ENCODE measurements at regions of chr3 and their contacts with region 1.

Region 1: GRCh38 chr3:99875929-99876841 is 58.5 kb downstream of the CMSS1 start:
- DNase-seq: peak; percentile 89
- H3K4me3 ChIP-seq: peak overlapping the region; percentile 60 to 96 (median 91)
- H3K27ac ChIP-seq: peak overlapping the region; percentile 99
- H3K4me1 ChIP-seq: peaks cover 49% of the 10 kb centered on the region
- H3K27me3 ChIP-seq: no peaks in the 10 kb centered on the region
- CTCF ChIP-seq: peak in 1 of 2 donors; percentile 21
- POLR2A ChIP-seq: peak; percentile 96

Region 2: DNA sequence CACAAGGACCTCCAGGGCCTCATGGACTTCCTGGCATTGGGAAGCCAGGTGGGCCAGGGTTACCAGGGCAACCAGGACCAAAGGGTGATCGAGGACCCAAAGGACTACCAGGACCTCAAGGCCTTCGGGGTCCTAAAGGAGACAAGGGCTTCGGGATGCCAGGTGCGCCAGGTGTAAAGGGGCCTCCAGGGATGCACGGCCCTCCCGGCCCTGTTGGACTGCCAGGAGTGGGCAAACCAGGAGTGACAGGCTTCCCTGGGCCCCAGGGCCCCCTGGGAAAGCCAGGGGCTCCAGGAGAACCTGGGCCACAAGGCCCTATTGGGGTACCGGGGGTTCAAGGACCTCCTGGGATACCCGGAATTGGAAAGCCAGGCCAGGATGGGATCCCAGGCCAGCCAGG is 81.7 kb before region 1 on chr3:
- CTCF ChIA-PET with region 1: no interaction called
- POLR2A ChIA-PET with region 1: no interaction called
- dilution Hi-C with region 1: no loop called
- intact Hi-C with region 1: no loop called
- DNase-seq: no peak
- H3K4me3 ChIP-seq: no peak overlapping the region
- H3K27ac ChIP-seq: no peak overlapping the region
- H3K4me1 ChIP-seq: no peaks in the 10 kb centered on the region
- H3K27me3 ChIP-seq: no peaks in the 10 kb centered on the region
- CTCF ChIP-seq: no peak
- POLR2A ChIP-seq: no peak

Region 3: GRCh38 chr3:99901200-99901926 is 25.2 kb after region 1 on chr3:
- CTCF ChIA-PET with region 1: interaction called, 3 read pairs
- POLR2A ChIA-PET with region 1: interaction called, 4 read pairs
- dilution Hi-C with region 1: no loop called
- intact Hi-C with region 1: loop called (anchors 1 kb)
- DNase-seq: peak; percentile 92
- H3K4me3 ChIP-seq: peak overlapping the region in 1 of 3 experiments; percentile 24
- H3K27ac ChIP-seq: peak overlapping the region; percentile 94
- H3K4me1 ChIP-seq: peaks cover 34% of the 10 kb centered on the region
- H3K27me3 ChIP-seq: no peaks in the 10 kb centered on the region
- CTCF ChIP-seq: no peak
- POLR2A ChIP-seq: no peak

Region 4: DNA sequence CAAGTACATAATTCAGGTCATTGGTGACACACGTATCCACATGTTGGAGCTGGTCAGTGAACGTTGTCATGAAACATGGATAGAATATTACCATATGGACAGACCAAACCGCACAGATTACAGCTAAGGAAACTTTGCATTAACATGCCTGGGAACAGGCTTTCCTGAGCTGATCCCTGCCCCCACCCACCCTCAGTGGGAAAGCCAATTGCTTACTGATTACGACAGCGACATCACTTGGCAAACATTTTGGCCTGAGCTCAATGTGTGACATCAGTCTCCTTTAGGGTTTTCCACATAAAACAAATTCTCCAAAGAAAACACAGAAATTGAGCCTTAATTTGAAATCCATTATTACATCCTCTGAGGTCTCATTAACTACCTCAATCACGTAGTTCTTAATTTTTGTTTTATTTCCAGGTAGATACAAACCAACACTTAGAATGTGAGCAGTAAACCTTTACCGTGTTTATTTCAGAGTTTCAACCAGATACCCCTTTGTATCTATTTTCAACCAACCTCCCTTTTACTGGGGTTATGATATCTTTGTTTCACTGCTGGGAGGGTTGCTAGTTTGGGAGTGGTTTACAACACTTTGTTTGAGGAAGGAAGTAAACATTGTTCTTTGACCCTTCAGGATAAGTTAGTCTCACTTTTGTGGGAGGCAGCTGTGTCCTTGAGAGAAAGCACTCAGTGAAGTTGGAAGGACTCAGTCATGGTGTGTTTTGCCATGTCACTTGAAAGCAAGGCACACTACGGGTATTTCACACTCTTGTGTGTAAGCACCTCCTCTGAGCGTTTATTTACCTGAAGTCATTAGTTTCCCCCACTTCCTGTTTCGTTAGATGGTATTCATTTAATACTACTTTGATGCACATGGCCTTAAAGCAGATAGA is 44.5 kb after region 1 on chr3:
- CTCF ChIA-PET with region 1: interaction called, 4 read pairs
- POLR2A ChIA-PET with region 1: interaction called, 4 read pairs
- dilution Hi-C with region 1: no loop called
- intact Hi-C with region 1: loop called (anchors 2 kb)
- DNase-seq: peak; percentile 66
- H3K4me3 ChIP-seq: no peak overlapping the region
- H3K27ac ChIP-seq: peak overlapping the region; percentile 65
- H3K4me1 ChIP-seq: peaks cover 41% of the 10 kb centered on the region
- H3K27me3 ChIP-seq: no peaks in the 10 kb centered on the region
- CTCF ChIP-seq: no peak
- POLR2A ChIP-seq: no peak

Region 5: GRCh38 chr3:99938270-99938911 is 62.2 kb after region 1 on chr3:
- CTCF ChIA-PET with region 1: no interaction called
- POLR2A ChIA-PET with region 1: no interaction called
- dilution Hi-C with region 1: no loop called
- intact Hi-C with region 1: no loop called
- DNase-seq: peak; percentile 41
- H3K4me3 ChIP-seq: no peak overlapping the region
- H3K27ac ChIP-seq: no peak overlapping the region
- H3K4me1 ChIP-seq: peaks cover 16% of the 10 kb centered on the region
- H3K27me3 ChIP-seq: no peaks in the 10 kb centered on the region
- CTCF ChIP-seq: no peak
- POLR2A ChIP-seq: no peak

Region 6: GRCh38 chr3:100006570-100007271 is 130.5 kb after region 1 on chr3:
- CTCF ChIA-PET with region 1: interaction called, 3 read pairs
- POLR2A ChIA-PET with region 1: interaction called, 4 read pairs
- dilution Hi-C with region 1: no loop called
- intact Hi-C with region 1: loop called (anchors 2 kb)
- DNase-seq: peak; percentile 72
- H3K4me3 ChIP-seq: no peak overlapping the region
- H3K27ac ChIP-seq: no peak overlapping the region
- H3K4me1 ChIP-seq: peaks cover 73% of the 10 kb centered on the region
- H3K27me3 ChIP-seq: no peaks in the 10 kb centered on the region
- CTCF ChIP-seq: no peak
- POLR2A ChIP-seq: no peak

Region 7: GRCh38 chr3:100159331-100160153 is 283.4 kb after region 1 on chr3:
- CTCF ChIA-PET with region 1: no interaction called
- POLR2A ChIA-PET with region 1: no interaction called
- dilution Hi-C with region 1: no loop called
- intact Hi-C with region 1: loop called (anchors 5 kb)
- DNase-seq: peak; percentile 94
- H3K4me3 ChIP-seq: peak overlapping the region in 2 of 3 experiments; percentile 14 to 43
- H3K27ac ChIP-seq: peak overlapping the region; percentile 75
- H3K4me1 ChIP-seq: peaks cover 41% of the 10 kb centered on the region
- H3K27me3 ChIP-seq: no peaks in the 10 kb centered on the region
- CTCF ChIP-seq: no peak
- POLR2A ChIP-seq: peak; percentile 22

Measured in endothelial cell of umbilical vein (primary cell).